Heart right ventricle (tissue), 16 donors: ENCODE measurements at regions of chr1 and their contacts with region 1.

Region 1: DNA sequence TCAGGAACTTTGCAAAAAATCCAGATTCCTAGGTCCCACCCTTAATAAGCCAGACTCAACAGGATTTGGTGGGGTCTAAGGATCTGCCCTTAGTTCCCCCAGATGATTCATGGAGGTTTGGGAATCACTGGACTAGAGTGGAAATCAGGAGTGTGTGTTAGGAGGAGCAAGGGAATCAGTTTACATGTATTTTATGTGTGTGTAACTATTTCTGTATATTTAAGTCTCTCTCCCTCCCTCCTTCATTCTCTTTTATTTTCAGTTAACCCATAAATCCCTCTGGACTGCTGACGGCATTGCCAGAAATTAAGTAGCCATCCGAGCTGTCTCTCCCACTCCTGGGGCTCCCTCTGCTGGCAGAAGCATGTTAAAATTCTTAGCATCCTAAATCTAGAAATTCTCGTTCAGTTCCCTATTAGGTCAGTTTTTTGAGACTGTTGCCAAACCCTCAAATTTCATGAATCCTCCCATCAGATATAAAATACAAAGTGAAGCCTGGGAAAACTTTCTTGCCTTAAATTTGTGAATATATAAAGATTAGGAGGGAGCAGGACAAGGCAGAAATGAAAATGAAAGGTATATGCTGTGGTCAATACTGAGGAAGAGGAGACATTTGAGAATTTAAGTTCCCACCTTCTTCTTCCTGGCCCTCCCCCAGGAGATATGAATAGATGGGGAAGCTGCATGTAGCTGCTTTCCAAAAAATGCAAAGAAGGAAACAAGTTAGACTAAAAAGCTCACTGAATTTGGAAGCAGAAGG is 11.7 kb upstream of the HSD11B1 start:
- DNase-seq: peak; percentile 60 to 86
- ATAC-seq: peak; percentile 46 to 79 (median 65)
- H3K4me3 ChIP-seq: no peak overlapping the region
- H3K27ac ChIP-seq: peak overlapping the region in 2 of 10 donors; percentile 5 to 69
- H3K4me1 ChIP-seq: peaks cover 0 to 36% (median 19%) of the 10 kb centered on the region in 9 donors
- H3K27me3 ChIP-seq: no peaks in the 10 kb centered on the region
- CTCF ChIP-seq: peak; percentile 64 to 94 (median 86)

Region 2: GRCh38 chr1:209190591-209191261 is 502.2 kb before region 1 on chr1:
- intact Hi-C with region 1: no loop called
- DNase-seq: peak; percentile 23 to 31
- ATAC-seq: peak in 4 of 8 donors; percentile 58 to 80 (median 68)
- H3K4me3 ChIP-seq: no peak overlapping the region
- H3K27ac ChIP-seq: no peak overlapping the region
- H3K4me1 ChIP-seq: peaks cover 0 to 5% (median 0%) of the 10 kb centered on the region in 9 donors
- H3K27me3 ChIP-seq: peaks cover 0 to 5% (median 0%) of the 10 kb centered on the region in 7 donors
- CTCF ChIP-seq: peak in 8 of 9 donors; percentile 62 to 79 (median 66)

Region 3: GRCh38 chr1:209585672-209586071 is 107.3 kb before region 1 on chr1:
- intact Hi-C with region 1: loop called in 2 of 10 experiments (anchors 5 kb)
- DNase-seq: peak; percentile 46 to 70
- ATAC-seq: peak; percentile 54 to 95 (median 87)
- H3K4me3 ChIP-seq: peak overlapping the region in 3 of 10 donors; percentile 6 to 29 (median 12)
- H3K27ac ChIP-seq: no peak overlapping the region
- H3K4me1 ChIP-seq: peaks cover 0 to 20% (median 10%) of the 10 kb centered on the region in 9 donors
- H3K27me3 ChIP-seq: peaks cover 0 to 56% (median 32%) of the 10 kb centered on the region in 7 donors
- CTCF ChIP-seq: peak in 3 of 9 donors; percentile 31 to 41 (median 32)

Region 4: DNA sequence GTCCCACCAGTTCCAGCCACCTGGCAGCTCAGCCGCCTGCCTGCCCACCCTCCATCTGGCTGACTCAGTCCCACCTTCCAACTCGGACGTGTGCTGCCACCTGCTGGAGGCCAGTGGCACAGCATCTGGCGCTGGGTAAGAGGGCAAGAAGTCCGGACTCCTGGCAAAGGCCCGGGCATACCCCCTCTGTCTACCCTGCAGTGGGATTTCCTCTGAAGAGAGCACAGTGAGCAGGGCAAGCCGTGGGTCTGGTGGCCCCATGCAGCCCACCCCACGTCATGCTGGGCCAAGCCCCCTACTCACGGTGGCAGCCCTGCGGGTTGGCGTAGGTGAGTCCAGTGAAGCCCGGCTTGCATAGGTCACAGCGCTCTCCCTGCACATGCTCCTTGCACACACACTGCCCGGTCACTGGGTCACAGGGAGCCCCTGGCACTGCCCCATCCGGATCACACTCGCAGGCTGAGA is 65.2 kb before region 1 on chr1:
- intact Hi-C with region 1: loop called in 6 of 10 experiments (anchors 5 to 10 kb)
- DNase-seq: peak; percentile 77 to 86
- ATAC-seq: peak; percentile 70 to 82 (median 78)
- H3K4me3 ChIP-seq: peak overlapping the region in 3 of 10 donors; percentile 11 to 32 (median 14)
- H3K27ac ChIP-seq: peak overlapping the region in 5 of 10 donors; percentile 7 to 76 (median 61)
- H3K4me1 ChIP-seq: peaks cover 20 to 60% (median 45%) of the 10 kb centered on the region in 9 donors
- H3K27me3 ChIP-seq: no peaks in the 10 kb centered on the region
- CTCF ChIP-seq: peak; percentile 93 to 99 (median 97)

Region 5: GRCh38 chr1:209643285-209644020 is 49.5 kb before region 1 on chr1:
- intact Hi-C with region 1: loop called in 5 of 10 experiments (anchors 5 to 10 kb)
- DNase-seq: peak; percentile 71 to 88
- ATAC-seq: peak; percentile 44 to 86 (median 78)
- H3K4me3 ChIP-seq: no peak overlapping the region
- H3K27ac ChIP-seq: peak overlapping the region; percentile 5 to 98 (median 88)
- H3K4me1 ChIP-seq: peaks cover 36 to 79% (median 75%) of the 10 kb centered on the region in 9 donors
- H3K27me3 ChIP-seq: no peaks in the 10 kb centered on the region
- CTCF ChIP-seq: peak in 3 of 9 donors; percentile 25 to 39 (median 37)

Region 6: GRCh38 chr1:209755926-209756614 is 63.1 kb after region 1 on chr1 and contains the start of gene TRAF3IP3:
- intact Hi-C with region 1: no loop called
- DNase-seq: peak in 1 of 2 donors; percentile 21
- ATAC-seq: peak; percentile 36 to 70 (median 60)
- H3K4me3 ChIP-seq: peak within 1 kb of the TSS in 4 of 10 donors; percentile 5 to 55 (median 14)
- H3K27ac ChIP-seq: peak within 1 kb of the TSS in 3 of 10 donors; percentile 31 to 92 (median 58)
- H3K4me1 ChIP-seq: peaks cover 0 to 63% (median 0%) of the 10 kb centered on the region in 9 donors
- H3K27me3 ChIP-seq: no peaks in the 10 kb centered on the region
- CTCF ChIP-seq: no peak
- total RNA-seq, gene TRAF3IP3: 0.45 to 8.0 (median 0.85) TPM